ENCODE measurements at regions of chr1 and their contacts with region 1.

Region 1: GRCh38 chr1:29033829-29034466 is 89.8 kb downstream of the TMEM200B start:
- DNase-seq: peak; percentile 67

Region 2: GRCh38 chr1:28885472-28885877 is 148.5 kb before region 1 on chr1:
- CTCF ChIA-PET with region 1: interaction called, 73 read pairs
- POLR2A ChIA-PET with region 1: interaction called, 5 read pairs
- DNase-seq: no peak

Region 3: GRCh38 chr1:28893403-28894102 is 140.4 kb before region 1 on chr1:
- CTCF ChIA-PET with region 1: interaction called, 15 read pairs
- POLR2A ChIA-PET with region 1: no interaction called
- DNase-seq: peak; percentile 84

Region 4: DNA sequence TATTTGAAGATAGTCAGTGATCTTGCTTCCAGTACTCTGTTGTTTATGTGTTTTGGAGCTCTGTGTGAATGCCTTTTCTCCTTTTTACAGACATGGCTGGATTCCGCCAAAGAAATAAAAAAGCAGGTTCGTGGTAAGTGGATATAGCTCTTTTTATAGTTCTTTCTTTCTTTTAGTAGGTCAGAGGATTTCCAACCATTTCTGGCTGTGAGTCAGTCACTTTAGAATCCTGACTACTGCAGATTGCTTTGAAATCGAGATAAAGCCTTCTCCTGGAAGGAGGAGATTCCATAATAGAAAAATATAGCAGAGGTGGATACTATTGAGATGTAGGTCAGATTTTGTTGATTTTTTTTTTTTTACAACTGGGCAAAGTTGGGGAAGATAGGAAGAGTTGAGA is 22.2 kb before region 1 on chr1:
- CTCF ChIA-PET with region 1: no interaction called
- POLR2A ChIA-PET with region 1: no interaction called
- DNase-seq: no peak

Measured in HEK293T (cell line).